ENCODE measurements at regions of chr11 and their contacts with region 1.

Region 1: DNA sequence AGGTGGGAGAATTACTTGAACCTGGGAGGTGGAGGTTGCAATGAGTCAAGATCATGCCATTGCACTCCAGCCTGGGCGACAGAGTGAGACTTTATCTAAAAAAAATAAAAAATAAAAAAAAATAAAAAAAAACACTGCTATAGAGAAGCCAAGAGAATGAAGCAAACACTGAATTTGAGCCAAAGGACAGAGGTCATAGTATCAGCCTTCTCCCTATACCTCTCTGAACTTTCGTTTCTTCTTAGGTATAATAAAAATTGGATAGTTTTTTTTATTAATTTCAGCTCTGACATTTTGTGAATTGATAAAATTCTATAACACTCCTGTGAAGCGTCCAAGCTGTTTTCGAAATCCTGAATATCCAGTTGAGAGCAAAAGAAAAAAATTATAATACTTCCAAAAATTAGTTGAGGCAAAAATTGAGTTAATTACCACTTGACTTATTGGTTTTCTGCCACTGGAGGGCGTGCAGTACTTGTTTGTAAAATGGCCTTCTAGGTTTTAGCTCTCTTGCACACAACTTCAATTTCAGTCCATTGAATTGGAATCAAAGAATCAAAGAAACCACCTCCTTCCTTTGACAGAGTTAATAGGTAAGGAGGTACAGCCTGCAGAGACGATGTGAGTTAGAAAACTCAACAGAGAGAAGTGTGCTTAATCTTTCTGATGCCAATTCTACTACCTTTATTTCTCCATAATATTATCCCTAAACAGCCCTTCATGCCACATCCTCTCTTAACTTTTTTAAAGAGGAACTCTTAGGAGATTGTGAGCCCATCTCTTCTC is 143.2 kb downstream of the BBOX1 start:
- DNase-seq: peak; percentile 50

Region 2: GRCh38 chr11:27241311-27242122 is 57.7 kb after region 1 on chr11:
- in situ Hi-C with region 1: no loop called
- DNase-seq: peak; percentile 9

Region 3: GRCh38 chr11:27485930-27486773 is 302.3 kb after region 1 on chr11:
- in situ Hi-C with region 1: loop called (anchors 25 kb)
- DNase-seq: peak; percentile 65

Measured in ACHN (cell line).